ENCODE measurements at regions of chr4 and their contacts with region 1.

Region 1: DNA sequence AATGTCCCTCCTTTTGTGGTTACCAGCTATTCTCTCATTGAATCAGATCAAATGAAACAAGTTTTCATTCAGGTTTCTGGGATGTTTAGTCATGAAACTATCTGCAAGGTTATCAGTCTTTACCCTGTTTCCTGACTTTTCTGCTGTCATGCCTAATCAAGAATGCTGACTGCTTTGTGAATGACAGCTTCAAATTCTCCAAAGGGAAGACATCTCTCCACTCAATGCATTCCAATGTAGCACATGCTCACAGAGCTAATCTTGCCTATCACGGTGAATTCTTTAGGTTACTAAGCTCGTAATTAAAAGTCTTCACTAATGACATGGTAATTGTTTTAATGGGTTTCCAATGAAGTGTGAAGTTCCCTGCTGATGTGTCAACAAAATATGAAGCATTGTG is 1068.5 kb downstream of the PCDH7 start:
- DNase-seq: no peak
- H3K4me3 ChIP-seq: no peak overlapping the region
- H3K4me3 Mint-ChIP-seq: no peak overlapping the region
- H3K27ac Mint-ChIP-seq: no peak overlapping the region
- H3K4me1 ChIP-seq: no peaks in the 10 kb centered on the region
- H3K4me1 Mint-ChIP-seq: no peaks in the 10 kb centered on the region
- H3K27me3 ChIP-seq: no peaks in the 10 kb centered on the region
- H3K27me3 Mint-ChIP-seq: peaks cover 3% of the 10 kb centered on the region
- CTCF ChIP-seq: no peak

Region 2: DNA sequence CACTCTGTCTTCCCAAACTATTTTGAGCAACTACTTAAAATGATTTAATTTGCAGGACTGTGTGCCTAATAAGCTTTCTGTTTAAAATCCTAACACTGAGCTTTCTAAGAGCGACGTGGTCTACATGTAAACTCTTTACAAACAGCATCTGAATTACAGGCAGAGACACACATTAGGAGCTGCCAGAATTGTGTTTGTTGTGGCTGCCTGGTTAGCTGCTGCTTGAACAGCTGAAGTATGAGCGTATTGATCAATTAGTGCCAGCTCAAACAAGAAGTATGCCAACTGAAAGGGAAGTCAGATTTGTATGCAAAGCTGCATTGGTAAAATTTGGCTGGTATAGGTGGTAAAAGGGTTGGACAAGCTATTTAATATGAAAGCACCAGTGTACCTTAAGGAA is 684.1 kb before region 1 on chr4:
- CTCF ChIA-PET with region 1: no interaction called
- POLR2A ChIA-PET with region 1: no interaction called
- intact Hi-C with region 1: loop called (anchors 5 kb)
- DNase-seq: no peak
- H3K4me3 ChIP-seq: no peak overlapping the region
- H3K4me3 Mint-ChIP-seq: no peak overlapping the region
- H3K27ac Mint-ChIP-seq: no peak overlapping the region
- H3K4me1 ChIP-seq: peaks cover 4% of the 10 kb centered on the region; the same call in 1 of the 2 replicates
- H3K4me1 Mint-ChIP-seq: no peaks in the 10 kb centered on the region
- H3K27me3 ChIP-seq: no peaks in the 10 kb centered on the region
- H3K27me3 Mint-ChIP-seq: no peaks in the 10 kb centered on the region
- CTCF ChIP-seq: no peak

Region 3: GRCh38 chr4:32060831-32061230 is 272.2 kb after region 1 on chr4:
- CTCF ChIA-PET with region 1: no interaction called
- POLR2A ChIA-PET with region 1: no interaction called
- intact Hi-C with region 1: no loop called
- DNase-seq: no peak
- H3K4me3 ChIP-seq: no peak overlapping the region
- H3K4me3 Mint-ChIP-seq: no peak overlapping the region
- H3K27ac Mint-ChIP-seq: no peak overlapping the region
- H3K4me1 ChIP-seq: no peaks in the 10 kb centered on the region
- H3K4me1 Mint-ChIP-seq: no peaks in the 10 kb centered on the region
- H3K27me3 ChIP-seq: no peaks in the 10 kb centered on the region
- H3K27me3 Mint-ChIP-seq: no peaks in the 10 kb centered on the region
- CTCF ChIP-seq: no peak